H1 (cell line): ENCODE measurements at regions of chr3 and their contacts with region 1.

Region 1: DNA sequence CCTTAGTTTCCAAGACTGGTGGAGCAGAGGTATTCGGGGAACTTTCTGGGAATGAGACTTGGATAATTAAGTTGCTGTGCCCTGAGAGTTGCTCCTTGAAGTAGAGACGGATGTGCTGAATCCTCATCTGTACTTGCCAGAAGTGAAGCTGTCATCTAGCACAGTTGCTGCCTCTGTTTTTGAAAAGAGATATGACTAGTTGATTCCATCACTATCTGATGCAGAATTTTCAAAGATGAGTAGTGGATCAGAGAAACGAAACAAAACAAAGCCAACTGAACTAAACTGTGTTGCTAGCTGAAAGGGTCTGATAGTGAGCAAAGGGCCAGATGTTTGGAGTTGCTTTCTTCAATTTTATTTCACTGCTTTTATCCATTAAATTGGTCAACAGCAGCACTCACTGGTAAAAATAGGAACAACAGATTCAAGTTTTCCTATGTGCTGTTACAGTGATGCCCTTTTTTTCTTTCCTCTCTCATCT is 52.7 kb downstream of the MITF start:
- DNase-seq: no peak
- H3K4me3 ChIP-seq: no peak overlapping the region
- H3K27ac ChIP-seq: no peak overlapping the region
- H3K4me1 ChIP-seq: no peaks in the 10 kb centered on the region
- H3K27me3 ChIP-seq: no peaks in the 10 kb centered on the region
- CTCF ChIP-seq: peak in 2 of 3 experiments; percentile 45 to 52; a peak in 2 of 4 replicates
- EP300 ChIP-seq: no peak
- POLR2A ChIP-seq: no peak
- RAD21 ChIP-seq: peak; percentile 68 to 71

Region 2: GRCh38 chr3:69691860-69692259 is 100.1 kb before region 1 on chr3:
- CTCF ChIA-PET with region 1: interaction called, 24 read pairs
- POLR2A ChIA-PET with region 1: no interaction called
- DNase-seq: no peak
- H3K4me3 ChIP-seq: no peak overlapping the region
- H3K27ac ChIP-seq: no peak overlapping the region
- H3K4me1 ChIP-seq: peaks cover 0 to 2% (median 0%) of the 10 kb centered on the region in 4 experiments; a peak in 1 of 7 replicates
- H3K27me3 ChIP-seq: peaks cover 0 to 3% (median 2%) of the 10 kb centered on the region in 4 experiments; a peak in 5 of 7 replicates
- CTCF ChIP-seq: no peak
- EP300 ChIP-seq: no peak
- POLR2A ChIP-seq: no peak
- RAD21 ChIP-seq: no peak

Region 3: DNA sequence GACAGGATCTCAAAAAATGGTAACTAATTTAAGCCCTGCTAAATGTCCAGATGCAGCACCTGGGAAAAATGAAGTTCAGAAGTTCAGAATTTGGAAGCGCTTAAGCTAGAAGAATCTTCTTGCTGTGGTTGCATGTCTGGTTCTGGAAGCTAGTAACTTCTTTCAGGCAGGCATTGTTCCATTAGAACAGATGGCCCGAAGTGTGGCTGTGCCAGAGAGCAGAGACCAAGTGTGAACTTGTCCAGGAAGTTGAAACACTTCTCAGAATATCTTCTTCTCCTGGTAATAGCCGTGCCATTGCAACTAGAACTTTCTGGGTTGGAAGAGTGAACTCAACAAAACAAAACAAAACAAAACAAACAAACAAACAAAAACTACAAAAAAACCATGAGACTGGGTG is 27.3 kb after region 1 on chr3:
- CTCF ChIA-PET with region 1: no interaction called
- POLR2A ChIA-PET with region 1: no interaction called
- DNase-seq: no peak
- H3K4me3 ChIP-seq: no peak overlapping the region
- H3K27ac ChIP-seq: no peak overlapping the region
- H3K4me1 ChIP-seq: no peaks in the 10 kb centered on the region
- H3K27me3 ChIP-seq: no peaks in the 10 kb centered on the region
- CTCF ChIP-seq: no peak
- EP300 ChIP-seq: no peak
- POLR2A ChIP-seq: no peak
- RAD21 ChIP-seq: no peak

Region 4: DNA sequence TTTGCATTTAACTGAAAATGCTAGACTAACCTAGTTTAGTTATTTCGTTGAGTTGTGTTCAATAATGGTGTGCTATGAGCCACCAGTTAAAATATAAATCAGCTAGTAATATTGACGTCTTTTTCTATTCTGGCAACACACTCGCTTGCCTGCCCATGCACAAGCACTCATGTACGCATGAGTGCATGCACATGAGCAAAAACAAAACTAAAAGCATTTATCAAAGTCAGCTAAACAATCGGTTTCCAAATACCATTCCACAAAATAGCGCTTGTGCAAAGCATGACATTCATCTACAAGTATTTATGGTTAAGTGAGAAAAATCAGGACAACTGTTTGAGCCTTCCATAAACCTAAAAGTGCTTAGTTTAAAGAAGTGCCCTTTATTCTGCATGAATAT is 194.5 kb after region 1 on chr3:
- CTCF ChIA-PET with region 1: no interaction called
- POLR2A ChIA-PET with region 1: no interaction called
- DNase-seq: no peak
- H3K4me3 ChIP-seq: no peak overlapping the region
- H3K27ac ChIP-seq: no peak overlapping the region
- H3K4me1 ChIP-seq: no peaks in the 10 kb centered on the region
- H3K27me3 ChIP-seq: peaks cover 0 to 17% (median 2%) of the 10 kb centered on the region in 4 experiments; a peak in 3 of 7 replicates
- CTCF ChIP-seq: no peak
- EP300 ChIP-seq: no peak
- POLR2A ChIP-seq: no peak
- RAD21 ChIP-seq: no peak